Activated CD4-positive, alpha-beta memory T cell treated with anti-CD3 and anti-CD28 coated beads, Interleukin-2, amount 10 ng/mL, durations not matched to agents 7 days and 5 days (primary cell): ENCODE measurements at regions of chr7 and their contacts with region 1.

Region 1: GRCh38 chr7:120987683-120988590 is 574 bp upstream of the CPED1 start:
- DNase-seq: peak; percentile 89
- H3K4me3 Mint-ChIP-seq: peak overlapping the region; percentile 65
- H3K27ac Mint-ChIP-seq: no peak overlapping the region
- H3K4me1 Mint-ChIP-seq: peaks cover 24% of the 10 kb centered on the region
- H3K27me3 Mint-ChIP-seq: peaks cover 50% of the 10 kb centered on the region

Region 2: GRCh38 chr7:120950539-120951308 is 37.2 kb before region 1 on chr7 and contains the start of gene ING3:
- CTCF ChIA-PET with region 1: interaction called, 12 read pairs
- POLR2A ChIA-PET with region 1: interaction called, 7 read pairs
- DNase-seq: peak; percentile 98
- H3K4me3 Mint-ChIP-seq: peak within 1 kb of the TSS; percentile 97
- H3K27ac Mint-ChIP-seq: peak within 1 kb of the TSS; percentile 96
- H3K4me1 Mint-ChIP-seq: peaks cover 34% of the 10 kb centered on the region
- H3K27me3 Mint-ChIP-seq: peaks cover 5% of the 10 kb centered on the region
- total RNA-seq, gene ING3: 22.2 to 26.5 TPM

Region 3: GRCh38 chr7:121081327-121081936 is 93.5 kb after region 1 on chr7:
- CTCF ChIA-PET with region 1: interaction called, 39 read pairs
- POLR2A ChIA-PET with region 1: interaction called, 4 read pairs
- DNase-seq: no peak
- H3K4me3 Mint-ChIP-seq: no peak overlapping the region
- H3K27ac Mint-ChIP-seq: no peak overlapping the region
- H3K4me1 Mint-ChIP-seq: no peaks in the 10 kb centered on the region
- H3K27me3 Mint-ChIP-seq: peaks cover 26% of the 10 kb centered on the region

Region 4: DNA sequence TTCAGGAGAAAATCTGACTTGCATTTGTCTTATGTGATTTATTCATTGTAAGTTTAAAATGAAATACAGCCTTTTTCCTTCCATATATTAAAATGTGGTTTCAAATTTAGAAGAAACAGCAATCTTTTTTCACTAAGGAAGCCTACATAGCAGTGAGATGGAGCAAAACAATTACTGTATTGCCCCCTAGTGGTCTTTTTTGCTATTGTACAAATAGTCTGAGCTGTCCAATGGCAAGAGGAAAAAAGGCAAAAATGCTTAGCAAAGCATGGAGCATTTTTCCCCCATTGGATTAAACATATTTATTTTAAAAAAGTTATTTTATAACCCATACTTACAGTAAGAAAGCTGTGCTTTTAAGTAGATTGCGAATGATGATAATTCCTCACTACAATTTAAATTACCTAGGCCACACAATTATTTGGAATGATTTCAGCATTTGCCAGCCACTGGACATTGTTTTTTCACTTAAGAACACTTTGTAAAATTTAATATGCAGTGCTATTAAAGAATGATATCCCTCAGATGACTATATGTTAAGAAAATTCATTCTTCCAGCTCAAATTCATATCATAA is 120.1 kb after region 1 on chr7:
- CTCF ChIA-PET with region 1: interaction called, 16 read pairs
- POLR2A ChIA-PET with region 1: no interaction called
- DNase-seq: no peak
- H3K4me3 Mint-ChIP-seq: no peak overlapping the region
- H3K27ac Mint-ChIP-seq: no peak overlapping the region
- H3K4me1 Mint-ChIP-seq: no peaks in the 10 kb centered on the region
- H3K27me3 Mint-ChIP-seq: peaks cover 19% of the 10 kb centered on the region